ENCODE measurements at regions of chr16 and their contacts with region 1.

Region 1: DNA sequence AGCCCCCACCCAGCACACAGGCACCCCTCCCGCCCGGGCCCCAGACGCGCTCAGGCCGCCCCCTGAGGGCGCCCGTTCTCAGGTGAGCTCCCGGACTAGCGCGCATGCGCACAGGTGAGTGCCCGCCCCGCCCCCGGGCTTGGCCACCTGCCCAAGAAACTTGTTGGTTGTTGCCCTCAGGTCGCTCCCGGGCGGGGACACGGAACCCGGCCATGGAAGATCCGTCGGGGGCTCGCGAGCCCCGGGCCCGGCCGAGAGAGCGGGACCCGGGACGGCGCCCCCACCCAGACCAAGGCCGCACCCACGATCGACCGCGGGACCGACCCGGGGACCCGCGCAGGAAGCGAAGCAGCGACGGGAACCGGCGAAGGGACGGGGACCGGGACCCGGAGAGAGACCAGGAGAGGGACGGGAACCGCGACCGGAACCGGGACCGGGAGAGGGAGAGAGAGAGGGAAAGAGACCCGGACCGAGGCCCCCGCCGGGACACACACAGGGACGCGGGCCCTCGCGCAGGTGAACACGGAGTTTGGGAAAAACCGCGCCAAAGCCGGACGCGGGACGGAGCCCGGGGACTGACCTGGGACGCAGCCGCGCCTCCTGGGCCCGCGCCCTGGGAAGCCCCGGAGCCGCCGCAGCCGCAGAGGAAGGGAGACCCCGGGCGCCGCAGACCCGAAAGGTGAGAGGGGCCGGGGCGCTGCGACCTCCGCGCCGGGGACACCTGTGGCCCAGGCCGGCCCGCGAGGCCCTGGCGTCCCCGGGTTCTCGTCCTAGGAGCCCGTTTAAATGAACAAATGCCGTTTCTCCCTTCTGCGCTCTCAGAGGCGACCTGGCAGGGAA is at the start of gene MARVELD3:
- DNase-seq: peak; percentile 93
- H3K4me3 ChIP-seq: peak within 1 kb of the TSS; percentile 77
- H3K27ac ChIP-seq: peak within 1 kb of the TSS; percentile 83
- H3K4me1 ChIP-seq: no peaks in the 10 kb centered on the region
- H3K27me3 ChIP-seq: peaks cover 10% of the 10 kb centered on the region
- CTCF ChIP-seq: no peak
- total RNA-seq, gene MARVELD3: 51.0 to 79.0 TPM

Region 2: DNA sequence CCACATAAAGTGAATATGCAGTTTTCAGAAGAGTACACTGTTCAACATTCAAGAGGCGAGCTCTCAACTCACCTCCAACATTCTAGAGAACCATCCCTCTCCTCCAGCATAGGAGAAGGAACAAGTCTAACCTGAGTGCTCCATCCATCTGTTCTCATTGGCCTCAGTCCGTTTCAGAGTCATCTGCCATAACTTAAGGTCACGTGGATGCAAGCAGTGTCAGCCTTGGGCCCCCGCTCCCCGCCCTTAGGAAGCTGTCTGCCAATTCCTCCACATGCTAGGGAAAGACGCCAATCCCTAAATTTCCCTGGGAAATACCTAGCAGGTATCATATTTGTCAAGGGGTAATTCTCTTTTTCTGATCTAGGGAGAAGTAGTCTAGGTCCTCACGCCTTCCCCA is 21.2 kb after region 1 on chr16:
- intact Hi-C with region 1: loop called (anchors 2 kb)
- DNase-seq: no peak
- H3K4me3 ChIP-seq: no peak overlapping the region
- H3K27ac ChIP-seq: no peak overlapping the region
- H3K4me1 ChIP-seq: no peaks in the 10 kb centered on the region
- H3K27me3 ChIP-seq: no peaks in the 10 kb centered on the region
- CTCF ChIP-seq: no peak

Region 3: GRCh38 chr16:71746442-71747046 is 120.3 kb after region 1 on chr16:
- intact Hi-C with region 1: loop called (anchors 5 kb)
- DNase-seq: peak; percentile 27
- H3K4me3 ChIP-seq: no peak overlapping the region
- H3K27ac ChIP-seq: no peak overlapping the region
- H3K4me1 ChIP-seq: no peaks in the 10 kb centered on the region
- H3K27me3 ChIP-seq: no peaks in the 10 kb centered on the region
- CTCF ChIP-seq: peak; percentile 56